ENCODE measurements at regions of chr11 and their contacts with region 1.

Region 1: DNA sequence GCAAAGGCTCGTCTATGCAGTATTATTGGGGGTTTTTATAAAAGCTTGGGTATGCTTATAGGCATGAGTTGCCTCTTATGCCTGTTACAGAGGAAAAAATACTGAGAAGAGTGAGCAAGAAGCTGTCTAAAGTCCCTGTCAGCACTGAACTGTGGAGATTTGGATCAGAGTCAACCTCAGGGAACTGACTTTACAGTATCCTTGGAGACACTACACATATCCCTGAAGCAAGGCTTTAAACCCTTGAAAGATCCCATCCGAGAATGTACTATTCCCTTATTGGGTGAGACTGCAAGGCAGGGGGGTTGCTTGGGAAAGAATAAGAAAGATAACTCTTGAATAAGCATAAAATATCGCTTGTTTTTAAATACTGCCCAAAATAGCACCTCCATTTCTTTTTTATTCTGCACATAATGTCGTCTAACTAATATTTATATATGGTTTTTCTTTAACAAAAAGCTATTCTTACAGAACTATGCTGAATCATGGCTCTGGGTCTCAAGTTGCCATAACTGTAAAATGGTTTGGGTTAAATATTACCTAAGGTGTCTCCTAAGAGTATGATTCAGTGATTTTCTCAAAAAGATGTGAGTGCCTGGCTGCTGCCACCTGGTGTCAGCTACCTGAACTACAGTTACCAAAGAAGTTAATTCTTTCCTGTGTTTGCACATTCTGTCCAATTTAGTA is 1062.8 kb downstream of the DLG2 start:
- DNase-seq: no peak
- ATAC-seq: peak; percentile 69
- H3K4me3 Mint-ChIP-seq: no peak overlapping the region
- H3K27ac Mint-ChIP-seq: no peak overlapping the region
- H3K4me1 Mint-ChIP-seq: no peaks in the 10 kb centered on the region
- H3K27me3 Mint-ChIP-seq: peaks cover 7% of the 10 kb centered on the region
- CTCF ChIP-seq: no peak

Region 2: GRCh38 chr11:83827940-83828554 is 736.3 kb before region 1 on chr11:
- CTCF ChIA-PET with region 1: interaction called, 6 read pairs
- POLR2A ChIA-PET with region 1: no interaction called
- intact Hi-C with region 1: loop called (anchors 2 kb)
- DNase-seq: no peak
- ATAC-seq: peak; percentile 45
- H3K4me3 Mint-ChIP-seq: no peak overlapping the region
- H3K27ac Mint-ChIP-seq: no peak overlapping the region
- H3K4me1 Mint-ChIP-seq: peaks cover 2% of the 10 kb centered on the region
- H3K27me3 Mint-ChIP-seq: peaks cover 5% of the 10 kb centered on the region
- CTCF ChIP-seq: no peak

Region 3: DNA sequence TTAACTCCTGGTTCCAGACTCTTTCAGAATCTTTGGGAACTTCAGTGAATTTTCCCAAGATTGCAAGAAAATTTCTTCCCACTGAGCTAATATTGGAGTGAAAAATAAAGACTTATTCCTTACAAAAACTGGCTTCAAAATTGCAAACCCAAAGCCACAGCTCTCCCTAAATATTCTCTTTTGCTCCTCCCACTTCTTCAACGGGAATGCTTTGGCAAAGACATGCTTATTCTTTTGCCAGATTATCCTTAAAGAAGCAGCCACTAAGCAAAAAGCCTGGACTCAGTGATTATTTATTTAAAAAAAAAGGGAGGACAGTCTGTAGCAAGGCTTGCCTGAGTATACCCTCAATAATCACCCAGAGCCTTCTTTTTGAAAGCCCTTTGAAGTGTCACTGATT is 375.8 kb before region 1 on chr11:
- CTCF ChIA-PET with region 1: no interaction called
- POLR2A ChIA-PET with region 1: no interaction called
- intact Hi-C with region 1: no loop called
- DNase-seq: no peak
- ATAC-seq: no peak
- H3K4me3 Mint-ChIP-seq: no peak overlapping the region
- H3K27ac Mint-ChIP-seq: no peak overlapping the region
- H3K4me1 Mint-ChIP-seq: no peaks in the 10 kb centered on the region
- H3K27me3 Mint-ChIP-seq: peaks cover 2% of the 10 kb centered on the region
- CTCF ChIP-seq: no peak

Region 4: DNA sequence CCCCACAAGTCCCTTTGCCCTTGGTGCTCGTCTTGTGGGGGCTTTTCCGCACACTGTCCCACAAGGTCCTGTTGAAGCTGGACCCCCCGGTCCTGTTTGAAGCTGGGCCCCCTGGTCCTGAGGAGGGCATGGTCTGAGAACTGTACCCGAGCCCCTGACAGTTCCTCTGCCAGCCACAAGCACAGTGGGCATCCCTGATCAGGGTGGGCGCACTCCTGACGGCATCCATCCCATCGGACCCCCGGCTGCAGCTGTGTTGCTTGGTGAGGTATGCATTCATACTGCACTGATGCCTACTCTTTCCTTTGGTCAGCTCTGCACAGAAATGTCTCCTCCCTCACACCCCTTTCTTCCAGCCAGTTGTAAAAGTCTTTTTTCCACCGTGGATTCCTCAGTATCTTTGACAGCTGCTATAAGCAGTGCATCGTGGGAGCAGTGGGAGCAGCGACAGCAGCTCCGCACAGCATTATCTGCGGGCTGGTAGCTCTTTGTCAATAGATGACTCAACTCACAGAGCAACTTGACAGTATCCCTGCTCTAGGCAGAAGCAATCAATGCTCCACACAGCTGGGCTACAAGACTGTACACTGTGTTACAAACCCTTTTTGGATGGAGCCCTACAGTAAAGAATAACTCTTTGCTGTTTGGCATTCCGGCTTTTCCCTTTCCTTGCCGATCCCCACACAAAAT is 247.3 kb before region 1 on chr11:
- CTCF ChIA-PET with region 1: no interaction called
- POLR2A ChIA-PET with region 1: no interaction called
- intact Hi-C with region 1: no loop called
- DNase-seq: no peak
- ATAC-seq: no peak
- H3K4me3 Mint-ChIP-seq: no peak overlapping the region
- H3K27ac Mint-ChIP-seq: no peak overlapping the region
- H3K4me1 Mint-ChIP-seq: no peaks in the 10 kb centered on the region
- H3K27me3 Mint-ChIP-seq: no peaks in the 10 kb centered on the region
- CTCF ChIP-seq: no peak

Region 5: GRCh38 chr11:84437071-84437980 is 127.0 kb before region 1 on chr11:
- CTCF ChIA-PET with region 1: no interaction called
- POLR2A ChIA-PET with region 1: no interaction called
- intact Hi-C with region 1: no loop called
- DNase-seq: no peak
- ATAC-seq: peak; percentile 76
- H3K4me3 Mint-ChIP-seq: peak overlapping the region; percentile 41
- H3K27ac Mint-ChIP-seq: no peak overlapping the region
- H3K4me1 Mint-ChIP-seq: peaks cover 8% of the 10 kb centered on the region
- H3K27me3 Mint-ChIP-seq: peaks cover 9% of the 10 kb centered on the region
- CTCF ChIP-seq: no peak

Region 6: DNA sequence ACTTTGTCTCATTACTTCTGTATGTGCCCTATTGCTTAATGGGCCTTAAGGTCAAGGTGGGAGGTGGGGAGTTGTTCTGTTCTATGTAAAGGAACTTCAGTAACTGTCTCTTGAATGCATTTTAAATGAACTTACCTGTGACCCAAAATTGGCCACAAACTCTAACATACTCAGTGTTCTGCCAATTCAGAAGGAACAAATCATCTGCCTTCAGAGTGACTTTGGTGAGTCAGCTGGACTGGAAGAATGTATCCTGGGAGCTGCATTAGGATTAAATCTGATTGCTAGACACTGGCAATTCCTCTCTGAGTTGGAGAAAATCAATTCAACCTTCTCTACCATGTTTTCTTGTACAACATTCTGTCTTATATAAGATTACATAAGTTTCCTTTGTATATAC is 42.0 kb before region 1 on chr11:
- CTCF ChIA-PET with region 1: no interaction called
- POLR2A ChIA-PET with region 1: no interaction called
- intact Hi-C with region 1: no loop called
- DNase-seq: no peak
- ATAC-seq: no peak
- H3K4me3 Mint-ChIP-seq: no peak overlapping the region
- H3K27ac Mint-ChIP-seq: no peak overlapping the region
- H3K4me1 Mint-ChIP-seq: no peaks in the 10 kb centered on the region
- H3K27me3 Mint-ChIP-seq: no peaks in the 10 kb centered on the region
- CTCF ChIP-seq: no peak

Region 7: GRCh38 chr11:84580428-84580827 is 16.1 kb after region 1 on chr11:
- CTCF ChIA-PET with region 1: interaction called, 18 read pairs
- POLR2A ChIA-PET with region 1: interaction called, 8 read pairs
- intact Hi-C with region 1: no loop called
- DNase-seq: no peak
- ATAC-seq: no peak
- H3K4me3 Mint-ChIP-seq: no peak overlapping the region
- H3K27ac Mint-ChIP-seq: no peak overlapping the region
- H3K4me1 Mint-ChIP-seq: no peaks in the 10 kb centered on the region
- H3K27me3 Mint-ChIP-seq: no peaks in the 10 kb centered on the region
- CTCF ChIP-seq: no peak